ENCODE measurements at regions of chr16 and their contacts with region 1.

Region 1: DNA sequence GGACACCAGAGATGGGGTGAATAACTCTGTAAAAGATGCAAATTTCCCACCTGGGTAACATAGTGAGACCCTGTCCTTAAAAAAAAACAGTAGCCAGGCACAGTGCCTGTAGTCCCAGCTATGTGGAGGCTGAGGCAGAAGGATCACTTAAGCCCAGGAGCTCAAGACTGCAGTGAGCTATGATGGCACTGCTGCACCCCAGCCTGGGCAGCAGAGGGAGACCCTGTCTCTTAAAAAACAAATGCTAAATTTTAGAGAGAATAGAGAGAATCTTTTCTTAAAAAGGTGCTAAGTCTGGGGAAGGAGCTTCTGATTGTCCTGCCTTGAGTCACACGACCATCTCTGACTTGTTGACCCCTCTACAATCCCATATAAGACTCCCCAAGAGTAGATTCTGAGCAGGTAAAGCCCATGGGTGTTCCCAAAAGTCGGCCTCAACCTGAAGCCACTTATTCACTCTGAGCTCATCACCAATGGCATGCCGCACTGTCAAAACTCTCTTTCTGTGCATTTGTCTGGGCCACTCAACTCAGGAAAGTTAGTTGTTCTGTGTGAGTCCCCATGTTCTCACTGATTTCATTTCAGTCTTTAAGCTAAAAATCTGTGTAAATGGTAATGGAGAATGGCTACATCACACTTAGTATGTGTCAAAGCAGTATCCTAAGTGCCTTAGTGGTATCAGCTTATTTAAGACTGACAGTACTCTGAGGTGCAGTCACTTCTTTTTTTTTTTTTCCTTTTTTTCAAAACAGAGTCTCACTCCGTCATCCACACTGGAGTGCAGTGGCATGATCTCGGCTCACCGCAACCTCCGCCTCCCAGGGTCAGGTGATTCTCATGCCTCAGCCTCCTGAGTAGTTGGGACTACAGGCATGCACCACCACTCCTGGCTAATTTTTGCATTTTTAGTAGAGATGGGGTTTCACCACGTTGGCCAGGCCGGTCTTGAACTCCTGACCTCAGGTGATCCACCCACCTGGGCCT is 41.6 kb downstream of the PRKCB start:
- DNase-seq: no peak
- ATAC-seq: peak; percentile 49
- H3K4me3 ChIP-seq: no peak overlapping the region
- H3K27ac ChIP-seq: 0 out of 3 replicates have a peak overlapping the region, but pooled peaks have one; percentile 5
- H3K4me1 ChIP-seq: peaks cover 7 to 19% of the 10 kb centered on the region in 2 experiments; a peak in 3 of 5 replicates
- H3K27me3 ChIP-seq: no peaks in the 10 kb centered on the region
- CTCF ChIP-seq: peak; percentile 10 to 38 (median 32); a peak in 3 of 6 replicates
- EP300 ChIP-seq: no peak
- POLR2A ChIP-seq: no peak
- RAD21 ChIP-seq: peak; percentile 21 to 45; a peak in 2 of 4 replicates

Region 2: DNA sequence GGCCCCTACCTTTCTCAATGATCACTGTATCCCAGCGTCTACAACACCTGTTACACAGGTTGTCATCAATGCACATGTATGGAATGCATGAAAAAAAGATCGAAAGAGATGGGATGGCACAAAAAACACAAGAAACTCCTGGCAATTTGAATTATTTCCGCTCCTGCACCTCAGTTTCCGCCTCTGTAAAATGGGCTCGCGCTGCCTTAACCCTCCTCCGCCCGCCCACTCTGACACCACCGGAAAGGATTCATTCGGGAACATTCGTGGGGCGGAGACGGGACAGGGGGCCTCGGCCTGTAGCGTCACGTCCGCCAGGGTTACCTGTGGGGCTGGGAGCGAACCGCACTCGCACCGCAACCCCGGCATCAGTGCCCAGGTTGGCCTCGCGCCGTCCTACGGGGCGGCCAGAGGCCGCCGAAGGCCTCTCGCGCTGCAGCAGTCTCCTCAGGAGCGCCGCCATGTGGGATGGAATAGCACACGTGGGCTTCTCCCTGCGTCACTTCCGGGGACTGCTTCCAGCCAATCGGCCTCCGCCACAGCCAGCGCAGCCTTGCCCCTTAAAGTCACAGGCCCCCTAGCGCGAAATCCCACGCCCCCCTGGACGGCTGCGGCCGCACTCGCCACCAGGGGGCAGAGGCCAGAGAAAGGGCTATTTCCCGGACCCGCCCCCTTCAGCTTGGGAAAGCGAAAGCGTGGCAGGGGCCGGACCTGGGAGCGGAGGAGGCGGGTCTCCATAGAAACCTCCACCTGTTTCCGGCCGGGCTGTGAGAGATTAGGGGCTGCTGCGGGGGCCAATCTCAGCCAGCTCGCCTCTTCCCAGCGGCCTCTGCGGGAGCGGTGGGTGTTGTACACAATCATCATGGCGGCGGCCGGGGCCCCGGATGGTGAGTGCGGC is 320.3 kb before region 1 on chr16 and contains the starts of genes EARS2 and UBFD1:
- CTCF ChIA-PET with region 1: no interaction called
- POLR2A ChIA-PET with region 1: no interaction called
- in situ Hi-C with region 1: no loop called
- intact Hi-C with region 1: no loop called
- DNase-seq: peak; percentile 95 to 99 (median 96)
- ATAC-seq: peak; percentile 96
- H3K4me3 ChIP-seq: peak within 1 kb of the TSS; percentile 97
- H3K27ac ChIP-seq: peak within 1 kb of the TSS; percentile 92
- H3K4me1 ChIP-seq: peaks cover 8 to 12% of the 10 kb centered on the region in 2 experiments; a peak in 3 of 5 replicates
- H3K27me3 ChIP-seq: no peaks in the 10 kb centered on the region
- CTCF ChIP-seq: peak; percentile 96 to 98 (median 98)
- EP300 ChIP-seq: peak; percentile 36; the same call in 1 of the 2 replicates
- POLR2A ChIP-seq: peak; percentile 88
- RAD21 ChIP-seq: peak; percentile 62 to 68
- polyA plus RNA-seq, gene EARS2: 17.6 to 20.4 TPM
- polyA plus RNA-seq, gene UBFD1: 10.7 to 11.0 TPM

Region 3: GRCh38 chr16:23784811-23785447 is 92.5 kb before region 1 on chr16:
- CTCF ChIA-PET with region 1: no interaction called
- POLR2A ChIA-PET with region 1: no interaction called
- in situ Hi-C with region 1: no loop called
- intact Hi-C with region 1: no loop called
- DNase-seq: peak; percentile 73 to 84 (median 80)
- ATAC-seq: peak; percentile 96
- H3K4me3 ChIP-seq: no peak overlapping the region
- H3K27ac ChIP-seq: peak overlapping the region; percentile 57; the same call in 2 of the 3 replicates
- H3K4me1 ChIP-seq: peaks cover 7 to 20% of the 10 kb centered on the region in 2 experiments; a peak in 3 of 5 replicates
- H3K27me3 ChIP-seq: no peaks in the 10 kb centered on the region; a peak in 1 of 5 replicates
- CTCF ChIP-seq: no peak
- EP300 ChIP-seq: peak; percentile 78
- POLR2A ChIP-seq: no peak
- RAD21 ChIP-seq: no peak

Region 4: DNA sequence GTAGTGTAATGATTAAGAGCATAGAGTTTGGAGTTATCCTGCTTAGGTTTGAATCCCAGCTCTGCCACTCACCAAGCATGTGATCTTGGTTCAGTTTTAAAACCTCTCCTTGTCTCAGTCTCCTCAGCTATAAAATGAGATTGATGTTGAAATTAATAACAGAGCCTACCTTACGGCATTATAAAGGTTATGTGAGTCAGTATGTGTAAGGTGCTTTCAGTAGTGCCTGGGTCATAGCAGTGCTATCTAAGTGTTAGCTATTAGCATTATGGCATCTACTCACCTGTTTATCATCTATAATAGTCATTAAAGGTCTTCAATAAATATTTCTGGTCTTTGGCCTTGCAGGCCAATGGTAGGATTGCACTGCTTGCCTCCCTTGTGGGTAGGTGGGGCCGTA is 11.8 kb after region 1 on chr16:
- CTCF ChIA-PET with region 1: no interaction called
- POLR2A ChIA-PET with region 1: interaction called, 15 read pairs
- in situ Hi-C with region 1: no loop called
- intact Hi-C with region 1: no loop called
- DNase-seq: no peak
- ATAC-seq: no peak
- H3K4me3 ChIP-seq: no peak overlapping the region
- H3K27ac ChIP-seq: no peak overlapping the region
- H3K4me1 ChIP-seq: peaks cover 3 to 34% of the 10 kb centered on the region in 2 experiments; a peak in 4 of 5 replicates
- H3K27me3 ChIP-seq: no peaks in the 10 kb centered on the region
- CTCF ChIP-seq: no peak
- EP300 ChIP-seq: no peak
- POLR2A ChIP-seq: no peak
- RAD21 ChIP-seq: no peak

Region 5: DNA sequence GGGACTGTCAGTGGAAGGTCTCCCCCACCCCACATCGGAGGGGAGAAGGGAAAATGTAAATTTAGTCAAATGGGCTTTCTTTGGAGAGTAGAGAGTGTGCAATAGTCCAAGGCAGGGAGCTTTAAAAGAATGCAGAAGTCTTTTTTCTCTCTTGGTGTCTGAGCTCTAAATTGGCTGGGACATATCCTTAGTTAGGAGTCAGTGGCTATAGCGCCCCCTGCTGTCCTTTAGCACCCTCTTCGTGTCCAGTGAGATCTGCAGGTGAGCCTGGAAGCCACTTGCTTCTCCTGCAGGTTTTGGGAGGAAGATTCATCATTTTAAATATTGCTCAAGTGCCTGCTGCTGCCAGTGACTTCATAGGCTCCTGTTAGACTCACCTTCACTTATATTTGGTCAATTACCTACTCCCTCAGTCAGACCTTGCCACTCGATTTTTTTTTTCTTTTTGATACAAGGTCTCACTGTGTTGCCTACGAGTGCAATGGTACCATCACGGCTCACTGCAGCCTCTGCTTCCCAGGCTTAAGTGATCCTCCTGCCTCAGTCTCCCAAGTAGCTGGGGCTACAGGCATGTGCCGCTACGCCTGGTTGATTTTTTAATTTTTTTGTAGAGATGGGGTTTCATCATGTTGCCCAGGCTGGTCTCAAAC is 133.2 kb after region 1 on chr16:
- CTCF ChIA-PET with region 1: interaction called, 11 read pairs
- POLR2A ChIA-PET with region 1: no interaction called
- in situ Hi-C with region 1: no loop called
- intact Hi-C with region 1: loop called (anchors 5 kb)
- DNase-seq: peak; percentile 71 to 91 (median 76)
- ATAC-seq: peak; percentile 93
- H3K4me3 ChIP-seq: no peak overlapping the region
- H3K27ac ChIP-seq: no peak overlapping the region
- H3K4me1 ChIP-seq: peaks cover 4 to 12% of the 10 kb centered on the region in 2 experiments; a peak in 3 of 5 replicates
- H3K27me3 ChIP-seq: no peaks in the 10 kb centered on the region
- CTCF ChIP-seq: peak; percentile 83 to 85 (median 85)
- EP300 ChIP-seq: no peak
- POLR2A ChIP-seq: no peak
- RAD21 ChIP-seq: peak; percentile 87 to 89

Measured in K562 (cell line).